WTC11 (cell line): ENCODE measurements at regions of chr5 and their contacts with region 1.

Region 1: GRCh38 chr5:131263648-131264450 is at the start of gene CDC42SE2:
- DNase-seq: peak; percentile 87
- ATAC-seq: peak; percentile 94
- H3K4me3 Mint-ChIP-seq: peak within 1 kb of the TSS; percentile 85
- H3K27ac Mint-ChIP-seq: peak within 1 kb of the TSS; percentile 87
- H3K4me1 Mint-ChIP-seq: peaks cover 14% of the 10 kb centered on the region
- H3K27me3 Mint-ChIP-seq: no peaks in the 10 kb centered on the region
- CTCF ChIP-seq: no peak
- total RNA-seq, gene CDC42SE2: 21.2 to 22.5 TPM (median 21.7 TPM) in 3 replicates

Region 2: GRCh38 chr5:131316026-131316425 is 52.2 kb after region 1 on chr5:
- CTCF ChIA-PET with region 1: interaction called, 6 read pairs
- POLR2A ChIA-PET with region 1: interaction called, 10 read pairs
- DNase-seq: no peak
- ATAC-seq: no peak
- H3K4me3 Mint-ChIP-seq: no peak overlapping the region
- H3K27ac Mint-ChIP-seq: no peak overlapping the region
- H3K4me1 Mint-ChIP-seq: peaks cover 42% of the 10 kb centered on the region
- H3K27me3 Mint-ChIP-seq: no peaks in the 10 kb centered on the region
- CTCF ChIP-seq: no peak

Region 3: GRCh38 chr5:131382407-131383395 is 118.9 kb after region 1 on chr5:
- CTCF ChIA-PET with region 1: interaction called, 13 read pairs
- POLR2A ChIA-PET with region 1: no interaction called
- DNase-seq: peak; percentile 12
- ATAC-seq: peak; percentile 98
- H3K4me3 Mint-ChIP-seq: no peak overlapping the region
- H3K27ac Mint-ChIP-seq: no peak overlapping the region
- H3K4me1 Mint-ChIP-seq: peaks cover 24% of the 10 kb centered on the region
- H3K27me3 Mint-ChIP-seq: no peaks in the 10 kb centered on the region
- CTCF ChIP-seq: peak; percentile 57; the same call in 1 of the 2 replicates